ENCODE measurements at regions of chr3 and their contacts with region 1.

Region 1: DNA sequence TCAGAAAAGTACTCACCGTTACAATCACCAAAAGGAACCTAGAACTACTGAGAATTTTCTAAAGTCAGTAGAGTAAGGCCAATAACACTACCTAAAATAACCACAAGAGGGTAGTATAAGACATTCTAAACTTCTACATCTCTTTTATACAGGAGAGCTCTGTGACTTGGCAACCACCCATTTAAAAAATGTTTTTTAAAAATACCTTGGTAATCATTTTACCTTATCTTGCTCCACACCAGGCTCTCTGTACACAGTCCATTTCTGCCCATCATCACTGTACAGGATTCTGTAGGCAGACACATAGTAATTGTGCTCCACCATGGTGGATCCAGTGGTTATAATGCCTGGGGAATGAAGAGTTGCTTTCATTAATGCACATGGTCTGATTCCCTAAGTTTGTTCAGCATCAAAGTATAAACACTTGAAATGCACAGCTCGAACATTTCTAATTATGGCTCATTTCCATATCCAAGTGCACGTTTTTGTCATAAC is 54.5 kb downstream of the ST3GAL6 start:
- DNase-seq: no peak
- H3K4me3 Mint-ChIP-seq: no peak overlapping the region
- H3K27ac Mint-ChIP-seq: no peak overlapping the region
- H3K4me1 Mint-ChIP-seq: no peaks in the 10 kb centered on the region
- H3K27me3 Mint-ChIP-seq: no peaks in the 10 kb centered on the region

Region 2: DNA sequence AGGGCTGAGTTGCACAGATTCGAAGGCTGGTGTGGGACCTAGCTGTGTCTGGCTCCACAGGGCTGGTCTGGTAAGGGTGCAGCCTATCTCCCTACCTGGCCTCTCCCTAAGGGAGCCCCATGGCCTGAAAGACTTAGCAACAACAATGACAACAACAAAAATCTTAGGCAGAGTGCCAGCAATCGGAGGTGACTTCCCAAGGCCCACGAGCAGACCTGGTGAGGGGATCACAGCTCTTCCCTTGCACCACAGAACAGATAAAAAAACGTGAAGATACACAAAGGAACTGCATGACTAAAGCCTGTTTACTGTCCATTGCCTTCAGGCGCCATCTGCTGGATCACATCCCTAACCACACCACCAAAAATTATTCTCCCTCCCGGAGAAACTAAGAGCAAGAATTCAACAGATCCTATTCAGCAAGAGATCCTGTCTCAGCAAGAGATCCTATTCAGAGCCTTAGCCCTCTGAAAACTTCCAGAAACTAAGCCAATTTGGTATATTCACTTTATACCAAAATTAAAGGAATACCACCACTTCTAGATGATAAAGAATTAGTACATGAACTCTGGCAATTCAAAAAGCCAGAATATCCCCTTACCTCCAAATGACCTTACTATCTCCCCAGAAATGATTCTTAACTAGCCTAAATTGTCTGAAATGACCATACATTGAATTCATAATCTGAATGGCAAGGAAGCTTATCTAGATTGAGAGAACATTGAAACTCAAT is 488.0 kb before region 1 on chr3:
- CTCF ChIA-PET with region 1: interaction called, 3 read pairs
- POLR2A ChIA-PET with region 1: no interaction called
- intact Hi-C with region 1: loop called (anchors 2 kb)
- DNase-seq: peak; percentile 53
- H3K4me3 Mint-ChIP-seq: no peak overlapping the region
- H3K27ac Mint-ChIP-seq: no peak overlapping the region
- H3K4me1 Mint-ChIP-seq: peaks cover 9% of the 10 kb centered on the region
- H3K27me3 Mint-ChIP-seq: peaks cover 3% of the 10 kb centered on the region

Region 3: DNA sequence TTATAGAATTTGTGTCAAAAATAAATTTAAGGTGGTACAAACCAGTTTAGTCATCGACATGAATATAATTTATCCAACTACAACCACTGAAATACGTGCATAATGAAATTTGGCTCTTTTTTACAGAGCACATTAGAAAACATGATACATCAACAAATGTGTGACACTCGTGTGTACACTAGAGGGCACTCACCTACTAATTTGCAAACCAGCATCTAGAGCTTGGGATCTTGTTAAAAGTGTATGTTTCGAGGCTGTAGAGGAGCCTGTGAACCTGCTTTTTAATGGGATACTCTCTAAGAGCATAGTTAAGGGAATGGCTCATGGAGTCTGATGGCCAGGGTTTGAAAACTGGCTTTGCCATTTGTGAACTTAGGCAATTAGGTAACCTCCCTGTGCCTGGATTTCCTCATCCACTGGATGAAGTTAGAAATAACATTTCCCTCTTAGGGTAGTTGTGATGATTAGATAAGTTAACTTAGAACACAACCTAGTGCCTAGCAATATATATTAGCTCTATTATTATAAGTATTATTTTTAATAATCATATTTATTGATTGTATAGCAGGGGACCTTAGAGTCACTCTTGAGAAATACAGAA is 215.4 kb before region 1 on chr3:
- CTCF ChIA-PET with region 1: interaction called, 78 read pairs
- POLR2A ChIA-PET with region 1: no interaction called
- intact Hi-C with region 1: loop called (anchors 1 kb)
- DNase-seq: no peak
- H3K4me3 Mint-ChIP-seq: no peak overlapping the region
- H3K27ac Mint-ChIP-seq: no peak overlapping the region
- H3K4me1 Mint-ChIP-seq: no peaks in the 10 kb centered on the region
- H3K27me3 Mint-ChIP-seq: peaks cover 9% of the 10 kb centered on the region

Region 4: GRCh38 chr3:98994128-98994762 is 176.7 kb after region 1 on chr3:
- CTCF ChIA-PET with region 1: interaction called, 33 read pairs
- POLR2A ChIA-PET with region 1: no interaction called
- intact Hi-C with region 1: loop called (anchors 1 kb)
- DNase-seq: no peak
- H3K4me3 Mint-ChIP-seq: no peak overlapping the region
- H3K27ac Mint-ChIP-seq: no peak overlapping the region
- H3K4me1 Mint-ChIP-seq: no peaks in the 10 kb centered on the region
- H3K27me3 Mint-ChIP-seq: no peaks in the 10 kb centered on the region

Region 5: DNA sequence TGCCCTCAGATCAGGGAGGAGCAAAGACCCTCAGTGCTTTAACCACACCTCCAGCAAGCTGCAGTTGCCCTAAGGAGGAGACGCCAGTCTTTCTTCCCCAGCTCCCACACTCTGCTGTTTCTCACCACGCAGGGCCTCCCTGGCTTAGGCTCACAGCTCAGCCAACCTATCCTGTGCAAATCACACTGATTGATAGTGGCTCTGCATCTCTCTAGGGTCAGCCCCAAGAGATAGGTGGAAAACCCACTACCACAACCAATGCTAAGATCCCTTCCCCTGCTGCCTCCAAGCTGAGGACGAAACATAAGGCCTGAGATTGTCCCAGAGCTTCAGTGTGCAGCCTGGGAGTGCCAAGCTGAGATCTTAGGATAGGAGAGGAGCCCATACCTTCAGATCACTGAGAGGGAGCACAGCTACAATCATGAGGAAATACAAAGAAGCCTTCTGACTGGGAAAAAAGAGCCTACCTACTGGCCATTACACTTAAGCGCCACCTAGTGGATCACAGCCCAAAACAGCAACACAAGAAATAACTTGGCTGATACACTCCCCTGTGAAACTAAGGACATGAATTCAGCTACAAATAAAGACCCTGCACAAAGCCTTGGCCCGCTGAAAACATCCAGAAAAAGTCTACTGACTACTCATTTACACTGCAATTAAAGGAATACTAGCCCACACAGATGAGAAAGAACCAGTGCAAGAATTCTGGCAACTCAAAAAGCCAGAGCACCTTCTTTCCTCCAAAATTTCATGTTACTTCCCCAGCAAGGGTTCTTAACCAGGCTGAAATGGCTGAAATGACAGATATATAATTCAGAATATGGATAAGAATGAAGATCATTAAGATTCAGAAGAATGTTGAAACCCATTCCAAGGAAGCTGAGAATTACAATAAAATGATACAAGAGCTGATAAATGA is 355.4 kb after region 1 on chr3:
- CTCF ChIA-PET with region 1: interaction called, 9 read pairs
- POLR2A ChIA-PET with region 1: no interaction called
- intact Hi-C with region 1: loop called (anchors 1 kb)
- DNase-seq: peak; percentile 39
- H3K4me3 Mint-ChIP-seq: no peak overlapping the region
- H3K27ac Mint-ChIP-seq: no peak overlapping the region
- H3K4me1 Mint-ChIP-seq: no peaks in the 10 kb centered on the region
- H3K27me3 Mint-ChIP-seq: no peaks in the 10 kb centered on the region

Region 6: DNA sequence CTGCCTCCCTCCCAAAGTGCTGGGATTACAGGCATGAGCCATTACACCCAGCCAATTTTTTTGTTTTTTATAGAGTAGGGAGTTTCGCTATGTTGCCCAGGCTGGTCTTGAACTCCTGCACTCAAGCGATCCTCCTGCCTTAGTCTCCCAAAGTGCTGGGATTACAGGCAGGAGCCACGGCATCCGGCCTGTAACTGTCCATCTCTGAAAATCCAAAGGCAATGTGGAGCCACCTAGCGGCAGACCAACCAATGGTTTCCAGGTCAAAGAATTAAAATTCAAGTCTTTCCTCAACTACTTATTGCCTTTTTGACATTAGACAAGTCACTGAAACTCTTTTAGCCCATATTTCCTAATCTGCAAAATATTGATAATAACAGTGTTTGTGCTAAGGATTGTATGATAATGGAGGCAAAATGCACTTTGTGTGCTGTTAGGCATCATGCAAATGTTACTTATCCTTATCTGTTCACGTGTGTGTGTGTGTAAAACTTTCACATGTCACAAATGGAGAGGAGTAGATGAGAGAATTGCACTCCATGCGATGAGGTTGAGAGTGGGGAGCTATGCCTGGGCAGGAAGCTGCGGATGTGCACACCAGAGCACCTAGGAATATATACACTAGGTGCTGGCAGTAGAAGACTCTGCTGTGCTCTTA is 869.5 kb after region 1 on chr3:
- CTCF ChIA-PET with region 1: interaction called, 5 read pairs
- POLR2A ChIA-PET with region 1: no interaction called
- intact Hi-C with region 1: loop called (anchors 5 kb)
- DNase-seq: peak; percentile 58
- H3K4me3 Mint-ChIP-seq: no peak overlapping the region
- H3K27ac Mint-ChIP-seq: no peak overlapping the region
- H3K4me1 Mint-ChIP-seq: no peaks in the 10 kb centered on the region
- H3K27me3 Mint-ChIP-seq: peaks cover 13% of the 10 kb centered on the region

Region 7: DNA sequence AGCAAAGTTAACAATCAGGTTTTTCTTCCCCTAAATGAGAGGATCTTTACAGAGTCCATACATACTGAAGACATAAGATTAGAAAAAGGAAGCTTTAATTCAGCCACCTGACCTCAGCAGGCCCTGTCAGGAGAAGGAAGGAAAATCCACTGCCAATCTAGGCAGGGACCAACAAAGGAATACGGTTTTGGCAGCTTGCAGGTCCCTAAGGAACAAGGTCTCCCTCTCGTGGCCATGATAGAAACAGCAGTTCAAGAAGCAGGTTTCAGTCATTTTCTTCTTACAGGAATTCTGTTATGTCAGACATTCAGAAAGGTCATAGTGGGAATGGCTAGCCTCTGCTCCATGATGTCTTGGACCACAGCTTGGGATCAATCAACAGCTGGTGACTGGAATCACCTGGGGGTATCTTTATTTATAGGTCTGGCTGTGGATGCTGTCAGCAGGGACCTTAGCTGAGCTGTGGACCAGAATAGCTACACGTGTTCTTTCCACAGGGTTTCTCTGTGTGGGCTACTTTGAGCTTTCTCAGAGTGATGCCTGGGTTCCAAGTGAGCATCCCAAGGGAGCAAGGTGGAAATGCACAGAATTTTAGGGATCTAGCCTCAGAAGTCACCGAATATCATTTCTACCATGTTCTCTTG is 990.7 kb after region 1 on chr3:
- CTCF ChIA-PET with region 1: no interaction called
- POLR2A ChIA-PET with region 1: no interaction called
- intact Hi-C with region 1: loop called (anchors 5 kb)
- DNase-seq: peak; percentile 42
- H3K4me3 Mint-ChIP-seq: no peak overlapping the region
- H3K27ac Mint-ChIP-seq: no peak overlapping the region
- H3K4me1 Mint-ChIP-seq: no peaks in the 10 kb centered on the region
- H3K27me3 Mint-ChIP-seq: no peaks in the 10 kb centered on the region

Measured in activated CD4-positive, alpha-beta memory T cell treated with anti-CD3 and anti-CD28 coated beads for 36 hours (primary cell).